ENCODE measurements at regions of chr7 and their contacts with region 1.

Region 1: DNA sequence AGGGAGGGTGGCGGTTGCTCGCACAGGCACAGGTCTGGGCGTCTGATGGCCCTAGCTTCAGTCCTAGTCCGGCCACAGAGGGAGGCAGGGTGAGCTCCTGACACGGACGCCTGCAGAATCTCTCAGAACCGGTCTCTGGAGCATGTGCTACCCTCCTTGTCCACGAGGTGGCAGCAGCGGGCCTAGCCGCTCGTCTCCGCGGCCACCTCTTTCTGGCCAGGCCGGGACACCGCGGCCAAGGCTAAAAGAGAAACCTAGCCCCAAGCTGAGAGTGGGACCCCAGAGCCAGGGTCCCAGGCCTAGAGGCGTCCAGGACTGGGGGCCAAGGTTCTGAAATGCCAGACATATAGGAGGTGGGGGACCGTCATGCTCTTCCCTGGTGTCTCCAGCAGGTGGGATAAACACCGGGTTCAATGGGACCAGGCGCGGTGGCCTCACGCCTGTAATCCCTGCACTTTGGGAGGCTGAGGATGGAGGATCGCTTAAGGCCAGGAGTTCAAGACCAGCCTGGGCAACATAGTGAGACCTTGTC is 3.2 kb upstream of the LAT2 start:
- DNase-seq: peak; percentile 72
- H3K4me3 ChIP-seq: no peak overlapping the region
- H3K27ac ChIP-seq: no peak overlapping the region
- H3K4me1 ChIP-seq: no peaks in the 10 kb centered on the region
- H3K27me3 ChIP-seq: no peaks in the 10 kb centered on the region
- CTCF ChIP-seq: peak; percentile 97
- POLR2A ChIP-seq: no peak

Region 2: DNA sequence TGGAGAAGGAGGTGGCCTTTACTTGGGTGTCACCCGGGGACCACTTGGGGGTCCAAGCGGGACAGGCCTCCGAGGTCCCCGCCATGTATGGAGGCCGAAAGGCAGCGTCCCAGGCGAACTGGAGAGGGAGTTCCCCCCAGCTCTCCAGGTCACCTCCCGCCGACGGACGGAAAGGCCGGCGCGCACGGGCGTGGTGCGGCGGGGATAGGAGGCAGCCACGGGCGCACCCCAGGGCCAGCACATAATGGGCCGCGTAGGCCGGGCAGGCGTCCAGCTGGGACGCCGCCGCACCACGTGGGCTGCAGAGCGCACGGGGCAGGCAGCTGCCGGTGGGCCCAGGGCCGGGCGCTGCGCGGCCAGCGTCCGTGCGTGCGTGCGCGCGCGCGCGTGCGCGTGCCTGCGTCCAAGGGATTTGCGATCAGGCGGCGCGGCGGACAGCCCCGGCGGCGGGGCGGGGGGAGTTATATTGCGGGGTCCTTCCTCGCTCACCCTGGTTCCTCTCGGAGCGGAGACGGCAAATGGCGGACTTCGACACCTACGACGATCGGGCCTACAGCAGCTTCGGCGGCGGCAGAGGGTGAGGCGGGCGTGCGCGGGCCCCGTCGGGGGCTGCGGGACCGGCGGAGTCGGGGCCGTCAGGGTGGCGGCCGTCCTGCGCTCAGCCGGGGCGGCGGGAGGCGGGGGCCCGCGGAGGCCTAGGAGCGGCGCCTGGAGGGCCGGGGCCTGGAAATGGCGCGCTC is 32.6 kb before region 1 on chr7 and contains the start of gene EIF4H:
- CTCF ChIA-PET with region 1: interaction called, 10 read pairs
- POLR2A ChIA-PET with region 1: interaction called, 3 read pairs
- dilution Hi-C with region 1: no loop called
- intact Hi-C with region 1: no loop called
- DNase-seq: peak; percentile 96
- H3K4me3 ChIP-seq: peak within 1 kb of the TSS; percentile 72 to 98 (median 95)
- H3K27ac ChIP-seq: peak within 1 kb of the TSS; percentile 84
- H3K4me1 ChIP-seq: peaks cover 33% of the 10 kb centered on the region
- H3K27me3 ChIP-seq: no peaks in the 10 kb centered on the region
- CTCF ChIP-seq: no peak
- POLR2A ChIP-seq: peak; percentile 92
- total RNA-seq, gene EIF4H: 415 and 434 TPM in 2 replicates

Region 3: GRCh38 chr7:74226633-74227032 is 20.0 kb after region 1 on chr7:
- CTCF ChIA-PET with region 1: interaction called, 15 read pairs
- POLR2A ChIA-PET with region 1: no interaction called
- dilution Hi-C with region 1: no loop called
- intact Hi-C with region 1: no loop called
- DNase-seq: no peak
- H3K4me3 ChIP-seq: no peak overlapping the region
- H3K27ac ChIP-seq: no peak overlapping the region
- H3K4me1 ChIP-seq: no peaks in the 10 kb centered on the region
- H3K27me3 ChIP-seq: no peaks in the 10 kb centered on the region
- CTCF ChIP-seq: no peak
- POLR2A ChIP-seq: no peak

Region 4: GRCh38 chr7:74262639-74263398 is 56.2 kb after region 1 on chr7:
- CTCF ChIA-PET with region 1: interaction called, 19 read pairs
- POLR2A ChIA-PET with region 1: no interaction called
- dilution Hi-C with region 1: no loop called
- intact Hi-C with region 1: no loop called
- DNase-seq: no peak
- H3K4me3 ChIP-seq: no peak overlapping the region
- H3K27ac ChIP-seq: no peak overlapping the region
- H3K4me1 ChIP-seq: no peaks in the 10 kb centered on the region
- H3K27me3 ChIP-seq: no peaks in the 10 kb centered on the region
- CTCF ChIP-seq: no peak
- POLR2A ChIP-seq: no peak

Region 5: DNA sequence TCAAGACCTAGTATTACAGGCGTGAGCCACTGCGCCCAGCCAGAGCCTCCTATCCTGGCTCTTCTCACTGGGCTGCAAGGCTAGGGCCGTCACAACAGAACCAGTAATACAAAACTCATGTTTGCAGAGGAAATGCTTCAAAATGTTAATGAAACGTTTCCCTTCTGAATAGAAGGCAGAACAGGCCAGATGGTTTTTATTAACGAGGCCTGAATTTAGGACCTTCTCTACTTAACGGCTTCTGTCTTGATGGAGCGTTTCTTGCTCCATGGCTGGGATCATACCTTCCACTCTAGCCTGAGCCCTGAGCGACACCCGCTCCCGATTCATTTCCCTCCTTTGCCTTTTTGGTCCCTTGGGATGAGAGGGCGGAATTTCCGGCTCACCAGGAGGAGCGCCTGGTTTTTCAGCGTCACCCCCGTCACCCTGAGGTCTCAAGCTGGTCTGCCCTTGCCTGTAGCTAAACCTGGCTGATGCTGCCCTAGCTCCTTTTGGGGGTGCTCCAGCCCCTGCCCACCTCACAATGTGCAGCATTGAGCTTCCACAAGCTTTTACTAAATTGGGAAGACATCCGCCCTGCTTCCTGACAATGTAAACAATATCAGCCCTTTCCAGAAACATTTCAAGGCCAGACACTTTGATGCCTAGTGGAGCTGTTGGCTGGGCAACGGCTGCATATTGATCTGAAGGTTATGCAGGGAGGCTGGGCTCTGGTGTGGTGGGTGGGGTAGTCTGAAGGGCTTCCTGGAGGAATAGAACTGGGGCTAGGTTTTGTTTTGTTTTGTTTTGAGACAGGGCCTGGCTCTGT is 87.7 kb after region 1 on chr7:
- CTCF ChIA-PET with region 1: interaction called, 17 read pairs
- POLR2A ChIA-PET with region 1: no interaction called
- dilution Hi-C with region 1: no loop called
- intact Hi-C with region 1: loop called (anchors 5 kb)
- DNase-seq: no peak
- H3K4me3 ChIP-seq: no peak overlapping the region
- H3K27ac ChIP-seq: no peak overlapping the region
- H3K4me1 ChIP-seq: peaks cover 12% of the 10 kb centered on the region
- H3K27me3 ChIP-seq: no peaks in the 10 kb centered on the region
- CTCF ChIP-seq: no peak
- POLR2A ChIP-seq: no peak

Region 6: GRCh38 chr7:74395745-74396311 is 189.2 kb after region 1 on chr7:
- CTCF ChIA-PET with region 1: interaction called, 405 read pairs
- POLR2A ChIA-PET with region 1: interaction called, 7 read pairs
- dilution Hi-C with region 1: no loop called
- intact Hi-C with region 1: loop called (anchors 1 kb)
- DNase-seq: no peak
- H3K4me3 ChIP-seq: no peak overlapping the region
- H3K27ac ChIP-seq: no peak overlapping the region
- H3K4me1 ChIP-seq: peaks cover 7% of the 10 kb centered on the region
- H3K27me3 ChIP-seq: no peaks in the 10 kb centered on the region
- CTCF ChIP-seq: no peak
- POLR2A ChIP-seq: no peak